ENCODE measurements at regions of chr2 and their contacts with region 1.

Region 1: GRCh38 chr2:131154071-131154531 is 49.0 kb downstream of the PLEKHB2 start:
- DNase-seq: peak; percentile 61 to 62
- H3K4me3 ChIP-seq: no peak overlapping the region
- H3K27ac ChIP-seq: no peak overlapping the region
- H3K4me1 ChIP-seq: no peaks in the 10 kb centered on the region
- H3K27me3 ChIP-seq: peaks cover 17% of the 10 kb centered on the region
- CTCF ChIP-seq: peak; percentile 89

Region 2: DNA sequence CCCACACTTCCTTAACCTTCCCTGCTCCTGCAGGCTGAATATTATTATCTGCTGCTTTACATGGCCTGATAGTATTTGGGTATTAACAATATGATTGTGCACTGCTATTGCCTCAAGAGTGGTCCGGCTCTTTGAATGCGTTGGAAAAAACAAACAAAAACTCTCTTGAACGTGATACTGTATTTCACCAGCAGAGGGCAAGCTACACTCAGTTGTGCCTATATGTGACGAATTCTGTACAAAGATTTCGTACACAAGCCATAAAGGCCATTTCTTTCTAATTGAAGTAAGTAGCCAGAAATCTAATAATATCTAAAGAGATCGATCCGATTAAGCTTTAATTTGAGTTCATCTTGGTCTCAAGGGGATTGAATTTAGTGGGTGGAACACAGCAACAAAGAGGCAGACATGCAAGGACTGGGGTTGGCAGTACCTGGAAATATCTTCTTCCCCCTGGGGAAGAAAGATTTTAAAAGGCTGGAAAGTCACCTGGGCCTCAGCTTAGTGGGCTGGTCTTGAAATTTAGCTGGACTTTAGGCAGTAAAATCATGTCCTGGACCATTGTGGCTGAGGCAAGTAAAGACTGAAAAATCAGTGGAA is 259.1 kb after region 1 on chr2:
- CTCF ChIA-PET with region 1: no interaction called
- POLR2A ChIA-PET with region 1: no interaction called
- intact Hi-C with region 1: loop called (anchors 5 kb)
- DNase-seq: no peak
- H3K4me3 ChIP-seq: no peak overlapping the region
- H3K27ac ChIP-seq: no peak overlapping the region
- H3K4me1 ChIP-seq: no peaks in the 10 kb centered on the region
- H3K27me3 ChIP-seq: peaks cover 74% of the 10 kb centered on the region
- CTCF ChIP-seq: peak; percentile 84

Region 3: GRCh38 chr2:131801210-131801744 is 647.2 kb after region 1 on chr2:
- CTCF ChIA-PET with region 1: no interaction called
- POLR2A ChIA-PET with region 1: no interaction called
- intact Hi-C with region 1: loop called (anchors 5 kb)
- DNase-seq: no peak
- H3K4me3 ChIP-seq: no peak overlapping the region
- H3K27ac ChIP-seq: no peak overlapping the region
- H3K4me1 ChIP-seq: no peaks in the 10 kb centered on the region
- H3K27me3 ChIP-seq: no peaks in the 10 kb centered on the region
- CTCF ChIP-seq: no peak